T-cell (primary cell): ENCODE measurements at regions of chr17 and their contacts with region 1.

Region 1: DNA sequence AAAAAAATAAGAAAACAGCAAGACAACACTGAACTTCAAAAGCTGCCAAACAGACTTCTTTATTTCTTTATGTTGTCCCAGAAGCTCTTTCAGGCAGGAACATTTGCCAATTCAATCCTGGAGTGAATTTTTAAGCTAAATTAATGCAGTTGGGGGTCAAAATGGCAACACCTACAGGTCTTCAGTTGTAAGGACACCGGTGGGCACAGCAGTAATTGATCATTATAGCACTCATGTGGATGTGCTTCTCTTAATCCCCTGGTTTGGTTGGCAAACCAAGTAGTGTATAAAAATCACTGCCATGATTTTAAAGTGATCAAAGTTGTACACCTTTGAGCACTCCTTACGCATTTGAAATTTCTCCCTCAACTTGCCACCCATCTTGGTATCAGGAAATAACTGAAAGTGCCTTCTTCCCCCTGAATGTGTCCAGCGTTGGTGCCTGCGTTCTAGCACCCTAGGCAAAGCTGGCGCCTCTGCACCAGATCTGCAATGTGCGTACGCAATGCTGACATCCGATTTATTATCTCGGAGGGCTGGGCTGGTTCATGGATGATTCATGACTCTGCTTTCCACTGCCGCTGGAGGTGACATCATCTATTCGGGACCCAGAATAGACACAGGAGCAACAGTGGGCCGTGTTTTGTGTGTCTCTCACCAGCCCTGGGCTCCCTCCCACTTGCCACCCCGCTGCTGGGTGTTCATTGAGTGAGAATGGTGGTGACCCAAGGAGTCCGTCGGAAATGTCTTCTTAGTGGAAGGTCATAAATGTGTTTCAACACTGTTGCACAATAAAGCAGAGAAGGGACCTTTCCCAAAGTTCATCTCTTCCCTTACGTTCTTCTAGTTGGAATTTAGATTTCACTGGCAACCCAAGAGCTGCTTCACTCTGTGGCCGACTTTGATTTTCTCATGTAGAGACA is 203.4 kb downstream of the CCDC182 start:
- DNase-seq: no peak
- ATAC-seq: no peak
- H3K4me3 ChIP-seq: no peak overlapping the region
- H3K4me3 Mint-ChIP-seq: no peak overlapping the region
- H3K27ac ChIP-seq: no peak overlapping the region
- H3K27ac Mint-ChIP-seq: no peak overlapping the region
- H3K4me1 ChIP-seq: peaks cover 0 to 15% of the 10 kb centered on the region in 2 experiments
- H3K4me1 Mint-ChIP-seq: peaks cover 44 to 63% (median 50%) of the 10 kb centered on the region in 3 donors
- H3K27me3 ChIP-seq: no peaks in the 10 kb centered on the region
- H3K27me3 Mint-ChIP-seq: no peaks in the 10 kb centered on the region

Region 2: DNA sequence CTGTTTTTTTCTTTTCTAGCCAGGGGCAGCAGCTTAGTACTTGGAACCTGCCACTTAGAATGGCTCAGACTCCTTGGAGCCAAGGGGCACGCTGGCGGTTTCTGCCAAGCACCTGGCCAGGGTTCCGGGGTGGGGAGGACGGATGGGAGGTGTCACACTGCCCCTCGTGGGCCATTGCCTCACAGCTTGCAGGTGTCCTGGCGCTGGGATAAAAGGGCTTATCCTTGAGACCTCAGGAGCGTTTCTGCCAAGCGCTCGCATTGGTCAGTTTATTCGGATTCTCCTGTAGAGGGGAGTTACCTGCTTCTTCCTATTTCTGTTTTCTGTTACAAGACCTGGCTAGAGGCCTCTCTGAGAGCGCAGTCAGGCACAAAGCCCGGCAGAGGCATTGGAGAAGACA is 50.8 kb before region 1 on chr17:
- CTCF ChIA-PET with region 1: no interaction called
- POLR2A ChIA-PET with region 1: no interaction called
- DNase-seq: no peak
- ATAC-seq: no peak
- H3K4me3 ChIP-seq: no peak overlapping the region
- H3K4me3 Mint-ChIP-seq: no peak overlapping the region
- H3K27ac ChIP-seq: no peak overlapping the region
- H3K27ac Mint-ChIP-seq: no peak overlapping the region
- H3K4me1 ChIP-seq: peaks cover 3 to 11% of the 10 kb centered on the region in 2 experiments
- H3K4me1 Mint-ChIP-seq: peaks cover 51 to 61% (median 54%) of the 10 kb centered on the region in 3 donors
- H3K27me3 ChIP-seq: no peaks in the 10 kb centered on the region
- H3K27me3 Mint-ChIP-seq: no peaks in the 10 kb centered on the region

Region 3: GRCh38 chr17:57552114-57552624 is 10.4 kb after region 1 on chr17:
- CTCF ChIA-PET with region 1: interaction called in 1 of 2 experiments, 10 read pairs
- POLR2A ChIA-PET with region 1: no interaction called
- DNase-seq: peak in 21 of 35 experiments; percentile 1 to 49 (median 22)
- ATAC-seq: peak in 3 of 4 experiments; percentile 50 to 60 (median 58)
- H3K4me3 ChIP-seq: no peak overlapping the region
- H3K4me3 Mint-ChIP-seq: peak overlapping the region in 1 of 3 donors; percentile 31
- H3K27ac ChIP-seq: no peak overlapping the region
- H3K27ac Mint-ChIP-seq: peak overlapping the region in 1 of 2 donors; percentile 19
- H3K4me1 ChIP-seq: peaks cover 13 to 22% of the 10 kb centered on the region in 2 experiments
- H3K4me1 Mint-ChIP-seq: peaks cover 57 to 71% (median 65%) of the 10 kb centered on the region in 3 donors
- H3K27me3 ChIP-seq: no peaks in the 10 kb centered on the region
- H3K27me3 Mint-ChIP-seq: no peaks in the 10 kb centered on the region